ENCODE measurements at regions of chrX and their contacts with region 1.

Region 1: DNA sequence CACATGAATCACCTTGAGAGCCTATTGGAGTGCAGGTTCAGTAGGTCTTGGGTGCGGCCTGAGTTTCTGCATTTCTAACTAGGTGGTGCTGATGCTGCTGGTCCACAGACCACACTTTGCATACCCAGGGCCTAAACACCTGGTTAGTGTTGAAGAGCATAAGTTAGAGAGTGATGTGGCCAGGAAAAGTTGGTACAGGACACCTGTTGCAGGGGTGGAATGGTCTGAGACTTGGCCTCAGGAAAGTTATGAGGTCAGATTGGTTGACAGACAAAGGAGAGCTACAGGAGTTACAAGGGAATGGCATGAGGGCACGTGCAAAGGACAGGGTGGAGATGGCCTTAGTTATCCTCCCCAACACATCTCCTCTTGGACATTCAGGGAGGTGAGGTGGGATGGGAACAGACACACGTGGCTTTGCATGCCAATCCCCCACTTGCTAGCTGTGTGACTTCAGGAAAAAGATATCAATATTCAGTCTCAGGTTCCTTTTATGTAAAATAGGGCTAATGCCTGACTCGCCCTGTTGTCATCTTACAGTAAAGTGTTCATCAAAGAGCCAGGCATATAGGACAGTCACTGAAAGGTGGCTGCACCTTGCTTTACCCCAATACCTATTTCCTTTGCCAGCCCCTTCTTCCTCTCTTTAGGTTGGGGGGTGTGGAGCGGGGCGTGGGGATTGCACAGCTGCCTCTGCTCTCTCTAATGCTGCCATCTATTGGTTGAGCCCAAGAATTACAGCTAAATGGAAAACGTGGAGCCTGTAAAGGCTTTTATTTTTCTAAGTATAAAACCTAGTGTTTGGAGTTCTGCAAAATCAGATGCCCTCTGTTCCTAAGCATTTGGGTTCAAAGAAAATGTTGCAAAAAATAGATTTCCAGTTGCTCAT is 47.5 kb downstream of the ATG4A start:
- DNase-seq: no peak
- ATAC-seq: no peak

Region 2: DNA sequence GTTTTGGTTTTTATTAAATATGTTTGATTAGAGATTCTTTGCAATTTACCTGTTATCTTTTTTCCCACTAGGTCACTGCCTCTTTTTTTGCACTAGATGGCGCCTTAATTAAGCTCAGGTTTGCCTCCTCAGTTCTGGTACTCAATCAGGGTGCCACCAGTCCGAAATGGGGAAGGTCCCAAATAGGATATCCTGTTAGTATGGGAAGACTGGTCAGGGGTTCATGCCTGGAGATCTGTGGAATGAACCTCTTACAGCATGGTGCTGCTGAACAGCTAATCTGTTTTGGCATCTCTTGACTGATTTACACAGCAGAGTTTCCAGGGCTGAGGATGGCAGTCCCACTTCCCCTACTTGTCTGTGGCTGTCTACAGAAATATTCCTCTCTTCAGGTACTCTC is 118.4 kb before region 1 on chrX:
- intact Hi-C with region 1: loop called (anchors 5 kb)
- DNase-seq: no peak
- ATAC-seq: no peak

Region 3: DNA sequence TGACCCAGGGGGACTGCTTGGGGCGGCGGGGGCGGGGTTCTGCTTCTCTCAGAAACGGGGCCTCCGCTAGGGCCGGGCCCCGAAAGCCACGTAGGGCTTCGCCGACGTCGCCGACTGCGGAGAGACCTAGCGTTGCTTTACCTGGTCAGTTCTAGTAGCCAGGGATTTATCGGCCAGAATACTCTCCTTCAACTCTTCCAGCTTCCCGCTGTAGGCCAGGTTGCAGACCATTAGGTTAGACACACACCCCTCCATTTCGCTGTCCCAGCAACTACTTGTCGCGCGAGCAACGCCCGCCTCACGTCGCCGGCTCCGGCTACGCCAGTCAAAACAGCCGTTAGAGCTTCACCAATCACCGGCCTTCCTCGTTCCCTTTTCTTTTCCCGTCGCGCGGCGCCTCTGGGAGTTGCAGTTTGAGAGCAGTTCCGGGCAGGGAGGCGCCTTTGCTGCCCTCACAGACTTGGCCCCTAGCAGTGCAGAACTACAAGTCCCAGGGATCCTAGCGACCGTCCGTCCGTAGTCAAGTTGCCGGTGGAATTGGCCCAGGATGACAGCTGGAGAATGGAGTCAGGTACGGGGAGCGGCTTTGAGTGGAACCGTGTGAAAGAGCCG is 47.7 kb before region 1 on chrX and contains the starts of genes ATG4A and PSMD10:
- intact Hi-C with region 1: loop called (anchors 5 kb)
- DNase-seq: peak; percentile 96
- ATAC-seq: peak; percentile 99
- total RNA-seq, gene ATG4A: 18.0 TPM
- total RNA-seq, gene PSMD10: 19.0 TPM

Region 4: GRCh38 chrX:108380222-108380621 is 241.2 kb after region 1 on chrX:
- intact Hi-C with region 1: no loop called
- DNase-seq: no peak
- ATAC-seq: no peak

Measured in Right ventricle myocardium inferior (tissue), 1 donor.